Activated CD4-positive, alpha-beta T cell treated with anti-CD3 and anti-CD28 coated beads, Interleukin-2, amount 10 ng/mL, durations not matched to agents 24 days and 14 days (primary cell): ENCODE measurements at regions of chr2 and their contacts with region 1.

Region 1: DNA sequence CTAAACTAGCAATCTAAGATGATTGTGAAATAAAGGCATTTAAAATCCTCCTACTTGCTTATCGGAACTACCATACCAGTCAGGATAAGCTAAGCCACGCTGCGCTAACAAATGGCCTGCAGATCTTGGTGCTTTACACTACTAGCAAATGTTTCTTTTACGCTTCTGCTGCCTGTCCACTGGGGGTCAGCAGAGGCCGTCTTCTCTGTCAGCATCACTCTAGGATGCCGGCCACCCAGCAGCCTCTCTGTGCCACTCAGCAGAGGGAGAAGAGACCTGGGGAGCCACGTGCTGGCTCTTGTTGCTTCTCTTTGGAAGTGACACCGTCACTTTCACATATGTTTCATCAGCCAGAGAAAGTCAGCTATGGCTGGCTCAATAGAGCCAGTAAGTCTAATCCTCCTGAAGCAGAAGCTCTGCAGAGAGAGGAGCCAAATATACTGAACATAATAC is 36.6 kb downstream of the COPS8 start:
- DNase-seq: peak; percentile 78
- H3K4me3 Mint-ChIP-seq: no peak overlapping the region
- H3K27ac Mint-ChIP-seq: peak overlapping the region; percentile 30
- H3K4me1 Mint-ChIP-seq: peaks cover 3% of the 10 kb centered on the region
- H3K27me3 Mint-ChIP-seq: peaks cover 2% of the 10 kb centered on the region

Region 2: DNA sequence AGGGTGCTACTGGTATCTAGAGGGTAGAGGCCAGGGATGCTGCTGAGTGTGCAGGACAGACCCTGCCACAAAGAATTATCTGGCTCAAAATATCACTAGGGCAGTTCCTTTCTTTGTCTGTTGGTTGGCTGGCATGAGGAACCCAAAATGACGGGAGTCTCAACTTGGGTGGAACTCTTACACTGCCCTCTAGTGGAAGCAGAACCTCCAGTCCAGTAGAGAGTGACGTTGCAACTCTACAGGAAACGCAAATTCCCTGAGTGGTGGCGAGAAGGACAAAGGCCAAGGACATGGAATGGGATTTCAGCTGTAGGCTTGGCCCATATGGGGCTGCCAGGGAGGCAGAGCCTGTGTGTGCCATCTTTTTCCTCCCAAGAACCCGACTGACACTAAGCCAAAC is 10.6 kb after region 1 on chr2:
- intact Hi-C with region 1: no loop called
- DNase-seq: peak; percentile 55
- H3K4me3 Mint-ChIP-seq: no peak overlapping the region
- H3K27ac Mint-ChIP-seq: no peak overlapping the region
- H3K4me1 Mint-ChIP-seq: no peaks in the 10 kb centered on the region
- H3K27me3 Mint-ChIP-seq: no peaks in the 10 kb centered on the region

Region 3: GRCh38 chr2:237413777-237414661 is 291.8 kb after region 1 on chr2 and contains the start of gene COL6A3:
- intact Hi-C with region 1: loop called (anchors 1 kb)
- DNase-seq: no peak
- H3K4me3 Mint-ChIP-seq: no peak within 1 kb of the TSS
- H3K27ac Mint-ChIP-seq: no peak within 1 kb of the TSS
- H3K4me1 Mint-ChIP-seq: peaks cover 3% of the 10 kb centered on the region
- H3K27me3 Mint-ChIP-seq: peaks cover 1% of the 10 kb centered on the region
- total RNA-seq, gene COL6A3: 27.6 and 28.7 TPM in 2 replicates